ENCODE measurements at regions of chr2 and their contacts with region 1.

Region 1: DNA sequence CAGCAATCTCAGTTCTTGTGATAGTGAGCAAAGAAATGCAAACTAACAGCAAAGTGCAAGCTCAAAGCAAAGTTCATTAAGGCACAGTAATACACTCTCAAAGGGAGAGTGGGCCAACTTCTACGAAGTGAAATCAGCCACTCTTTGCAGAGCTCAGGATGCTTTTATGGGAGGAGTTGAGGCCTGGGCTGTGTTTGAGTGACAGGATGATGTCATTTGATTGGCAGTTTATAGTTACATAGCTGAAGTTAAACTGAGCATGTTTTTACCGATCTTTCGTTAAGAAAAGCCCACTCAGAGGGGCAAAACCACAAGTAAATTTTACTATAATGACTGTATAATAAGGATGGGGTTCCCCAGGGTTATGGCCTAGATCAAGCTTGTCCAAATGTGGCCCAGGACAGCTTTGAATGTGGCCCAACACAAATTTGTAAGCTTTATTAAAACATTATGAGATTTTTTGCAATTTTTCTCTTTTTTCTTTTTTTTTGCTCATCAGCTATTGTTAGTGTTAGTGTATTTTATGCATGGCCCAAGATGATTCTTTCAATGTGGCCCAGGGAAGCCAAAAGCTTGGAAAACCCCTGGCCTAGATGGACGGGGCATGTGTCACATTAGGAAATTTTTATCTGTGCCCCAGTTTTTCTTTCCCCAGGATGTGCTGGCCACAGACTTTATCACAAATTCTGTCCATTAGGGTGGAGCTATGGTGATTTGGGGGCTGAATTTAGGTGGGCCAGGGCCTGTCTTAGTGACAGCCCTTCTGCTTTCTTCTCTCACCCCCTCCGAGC is 8.3 kb upstream of the DNAH7 start:
- DNase-seq: no peak
- H3K4me3 ChIP-seq: no peak overlapping the region
- H3K4me3 Mint-ChIP-seq: no peak overlapping the region
- H3K27ac ChIP-seq: no peak overlapping the region
- H3K27ac Mint-ChIP-seq: no peak overlapping the region
- H3K4me1 ChIP-seq: peaks cover 0 to 3% of the 10 kb centered on the region in 2 donors
- H3K4me1 Mint-ChIP-seq: peaks cover 8% of the 10 kb centered on the region
- H3K27me3 ChIP-seq: no peaks in the 10 kb centered on the region
- H3K27me3 Mint-ChIP-seq: peaks cover 0 to 3% (median 0%) of the 10 kb centered on the region in 3 donors
- CTCF ChIP-seq: no peak

Region 2: DNA sequence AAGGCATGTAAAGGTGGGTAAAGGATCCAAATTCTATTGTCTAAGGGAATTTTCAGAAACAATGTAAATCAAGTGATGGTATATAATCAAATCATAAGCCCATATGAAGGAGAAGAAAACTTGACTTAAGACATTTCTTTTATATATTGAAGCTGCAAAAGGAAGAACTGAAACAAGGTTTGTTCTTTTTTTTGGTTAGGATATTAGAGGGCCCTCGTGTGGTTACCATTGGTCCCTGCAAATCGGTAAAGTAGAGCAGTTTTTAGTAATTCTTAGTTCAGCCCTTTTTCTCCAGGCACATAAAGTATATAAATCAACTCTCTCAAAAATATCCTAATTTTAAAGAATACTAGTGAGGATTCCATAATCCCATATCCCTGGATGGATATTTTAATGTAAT is 200.0 kb after region 1 on chr2:
- intact Hi-C with region 1: loop called in 1 of 2 experiments (anchors 10 kb)
- DNase-seq: peak; percentile 50 to 69 (median 63)
- H3K4me3 ChIP-seq: no peak overlapping the region
- H3K4me3 Mint-ChIP-seq: no peak overlapping the region
- H3K27ac ChIP-seq: no peak overlapping the region
- H3K27ac Mint-ChIP-seq: no peak overlapping the region
- H3K4me1 ChIP-seq: peaks cover 20 to 32% of the 10 kb centered on the region in 2 donors
- H3K4me1 Mint-ChIP-seq: peaks cover 30% of the 10 kb centered on the region
- H3K27me3 ChIP-seq: no peaks in the 10 kb centered on the region
- H3K27me3 Mint-ChIP-seq: no peaks in the 10 kb centered on the region
- CTCF ChIP-seq: peak; percentile 72

Measured in CD14-positive monocyte (primary cell).